WTC11 (cell line): ENCODE measurements at regions of chr2 and their contacts with region 1.

Region 1: GRCh38 chr2:123808243-123808642 is 216.8 kb upstream of the CNTNAP5 start:
- DNase-seq: peak; percentile 48
- ATAC-seq: peak; percentile 97
- H3K4me3 Mint-ChIP-seq: no peak overlapping the region
- H3K27ac Mint-ChIP-seq: no peak overlapping the region
- H3K4me1 Mint-ChIP-seq: no peaks in the 10 kb centered on the region
- H3K27me3 Mint-ChIP-seq: no peaks in the 10 kb centered on the region; the same call in 1 of the 2 replicates
- CTCF ChIP-seq: peak; percentile 61

Region 2: DNA sequence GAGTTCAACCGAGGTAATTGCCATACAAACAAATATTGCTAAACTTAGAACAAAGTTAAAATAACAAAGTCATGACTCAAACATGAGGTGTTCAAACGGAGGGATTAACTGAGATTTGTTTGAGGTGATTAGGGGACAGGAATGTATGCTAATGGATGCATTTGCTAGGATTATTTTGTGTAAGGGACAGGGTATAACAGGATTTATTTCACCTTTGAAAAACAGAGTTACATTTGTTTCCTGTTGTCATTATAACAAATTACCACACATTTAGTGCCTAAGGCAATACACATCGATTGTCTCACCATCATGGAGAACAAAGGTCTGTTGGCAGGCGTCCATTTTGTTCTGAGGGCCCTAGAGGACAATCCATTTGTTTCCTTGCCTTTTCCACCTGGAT is 87.5 kb before region 1 on chr2:
- CTCF ChIA-PET with region 1: no interaction called
- POLR2A ChIA-PET with region 1: no interaction called
- DNase-seq: no peak
- ATAC-seq: no peak
- H3K4me3 Mint-ChIP-seq: no peak overlapping the region
- H3K27ac Mint-ChIP-seq: no peak overlapping the region
- H3K4me1 Mint-ChIP-seq: no peaks in the 10 kb centered on the region
- H3K27me3 Mint-ChIP-seq: no peaks in the 10 kb centered on the region
- CTCF ChIP-seq: no peak

Region 3: DNA sequence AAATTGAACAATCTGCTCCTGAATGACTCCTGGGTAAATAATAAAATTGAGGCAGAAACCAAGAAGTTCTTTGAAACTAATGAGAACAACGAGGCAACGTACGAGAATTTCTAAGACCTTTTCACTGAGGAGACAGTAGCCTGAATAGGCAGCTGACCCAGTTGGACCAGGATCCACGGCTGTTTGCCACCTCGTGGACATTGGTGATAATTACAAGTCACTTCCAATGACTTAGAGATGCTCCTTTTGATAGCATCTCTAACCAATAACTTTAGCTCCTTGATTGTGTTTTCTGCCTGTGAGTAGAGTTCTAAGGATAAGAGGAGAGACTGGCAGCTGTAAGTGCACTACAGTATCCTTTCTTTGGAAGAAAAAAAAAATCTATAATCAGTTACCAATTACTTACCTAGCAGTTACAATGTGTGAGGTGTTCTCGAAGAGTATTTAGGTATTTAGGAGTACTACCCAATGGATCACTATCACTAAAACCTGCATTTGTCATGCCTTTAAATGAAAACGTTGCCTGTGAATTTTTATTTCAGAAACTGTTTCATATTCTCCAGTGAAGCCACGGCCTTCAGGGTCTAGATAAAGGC is 185.6 kb after region 1 on chr2:
- CTCF ChIA-PET with region 1: interaction called, 14 read pairs
- POLR2A ChIA-PET with region 1: no interaction called
- DNase-seq: peak; percentile 63
- ATAC-seq: peak; percentile 87
- H3K4me3 Mint-ChIP-seq: no peak overlapping the region
- H3K27ac Mint-ChIP-seq: no peak overlapping the region
- H3K4me1 Mint-ChIP-seq: peaks cover 4% of the 10 kb centered on the region
- H3K27me3 Mint-ChIP-seq: peaks cover 6% of the 10 kb centered on the region
- CTCF ChIP-seq: peak; percentile 50